Prostate gland (tissue), 2 donors: ENCODE measurements at regions of chrX and their contacts with region 1.

Region 1: DNA sequence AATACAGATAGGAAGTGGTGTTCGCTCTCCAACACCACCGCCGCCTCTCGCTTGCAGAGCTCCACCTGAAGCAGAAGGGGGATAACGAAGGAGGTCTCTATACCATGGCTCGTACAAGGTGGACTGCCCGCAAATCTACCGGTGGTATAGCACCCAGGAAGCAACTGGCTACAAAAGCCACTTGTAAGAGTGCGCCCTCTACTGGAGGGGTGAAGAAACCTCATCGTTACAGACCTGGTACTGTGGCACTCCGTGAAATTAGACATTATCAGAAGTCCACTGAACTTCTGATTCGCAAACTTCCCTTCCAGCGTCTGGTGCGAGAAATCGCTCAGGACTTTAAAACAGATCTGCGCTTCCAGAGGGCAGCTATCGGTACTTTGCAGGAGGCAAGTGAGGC is 5.2 kb upstream of the BMP15 start:
- DNase-seq: no peak
- H3K4me3 ChIP-seq: no peak overlapping the region
- H3K27ac ChIP-seq: no peak overlapping the region
- H3K4me1 ChIP-seq: no peaks in the 10 kb centered on the region
- H3K27me3 ChIP-seq: no peaks in the 10 kb centered on the region
- CTCF ChIP-seq: no peak
- POLR2A ChIP-seq: no peak

Region 2: GRCh38 chrX:50691820-50692219 is 213.5 kb before region 1 on chrX:
- intact Hi-C with region 1: loop called (anchors 10 kb)
- DNase-seq: peak; percentile 3
- H3K4me3 ChIP-seq: no peak overlapping the region
- H3K27ac ChIP-seq: no peak overlapping the region
- H3K4me1 ChIP-seq: no peaks in the 10 kb centered on the region
- H3K27me3 ChIP-seq: no peaks in the 10 kb centered on the region
- CTCF ChIP-seq: peak in 3 of 4 experiments; percentile 33 to 65 (median 58)
- POLR2A ChIP-seq: no peak